Transverse colon (tissue), 4 donors: ENCODE measurements at regions of chr4 and their contacts with region 1.

Region 1: GRCh38 chr4:65383589-65384305 is 286.5 kb downstream of the EPHA5 start:
- DNase-seq: no peak
- H3K4me3 ChIP-seq: no peak overlapping the region
- H3K27ac ChIP-seq: no peak overlapping the region
- H3K4me1 ChIP-seq: no peaks in the 10 kb centered on the region
- H3K27me3 ChIP-seq: no peaks in the 10 kb centered on the region
- CTCF ChIP-seq: no peak
- EP300 ChIP-seq: no peak
- POLR2A ChIP-seq: no peak

Region 2: GRCh38 chr4:65265538-65265937 is 118.2 kb before region 1 on chr4:
- in situ Hi-C with region 1: no loop called
- intact Hi-C with region 1: no loop called
- DNase-seq: no peak
- H3K4me3 ChIP-seq: no peak overlapping the region
- H3K27ac ChIP-seq: no peak overlapping the region
- H3K4me1 ChIP-seq: no peaks in the 10 kb centered on the region
- H3K27me3 ChIP-seq: no peaks in the 10 kb centered on the region
- CTCF ChIP-seq: no peak
- EP300 ChIP-seq: no peak
- POLR2A ChIP-seq: no peak

Region 3: DNA sequence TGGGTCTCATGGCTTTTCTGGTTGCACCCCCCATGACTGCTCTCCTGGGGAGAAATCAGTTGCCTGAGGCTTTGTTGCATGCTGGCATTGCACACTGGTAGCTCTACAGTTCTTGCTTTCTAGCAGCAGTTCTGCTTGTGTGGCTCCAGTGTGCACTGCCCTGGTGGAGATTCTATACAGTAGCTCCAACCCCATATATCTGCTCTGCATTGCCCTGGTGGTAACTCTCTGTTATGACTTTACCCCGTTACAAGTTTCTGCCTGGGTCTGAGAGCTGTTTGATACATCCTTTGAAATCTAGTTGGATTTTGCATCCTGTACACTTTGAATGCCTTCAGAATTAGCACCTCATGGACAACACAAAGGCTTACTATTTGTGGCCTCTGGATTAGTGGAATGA is 528.0 kb after region 1 on chr4:
- in situ Hi-C with region 1: no loop called
- intact Hi-C with region 1: loop called (anchors 5 kb)
- DNase-seq: no peak
- H3K4me3 ChIP-seq: no peak overlapping the region
- H3K27ac ChIP-seq: no peak overlapping the region
- H3K4me1 ChIP-seq: no peaks in the 10 kb centered on the region
- H3K27me3 ChIP-seq: no peaks in the 10 kb centered on the region
- CTCF ChIP-seq: no peak
- EP300 ChIP-seq: no peak
- POLR2A ChIP-seq: no peak